ENCODE measurements at regions of chr17 and their contacts with region 1.

Region 1: GRCh38 chr17:67689534-67690177 is 28.1 kb upstream of the NOL11 start:
- DNase-seq: peak; percentile 57 to 63 (median 62)
- H3K4me3 ChIP-seq: no peak overlapping the region
- H3K4me3 Mint-ChIP-seq: no peak overlapping the region
- H3K27ac ChIP-seq: no peak overlapping the region
- H3K27ac Mint-ChIP-seq: peak overlapping the region in 2 of 7 donors; percentile 47 to 54
- H3K4me1 ChIP-seq: no peaks in the 10 kb centered on the region
- H3K4me1 Mint-ChIP-seq: peaks cover 0 to 4% (median 3%) of the 10 kb centered on the region in 4 donors
- H3K27me3 ChIP-seq: no peaks in the 10 kb centered on the region
- H3K27me3 Mint-ChIP-seq: no peaks in the 10 kb centered on the region

Region 2: DNA sequence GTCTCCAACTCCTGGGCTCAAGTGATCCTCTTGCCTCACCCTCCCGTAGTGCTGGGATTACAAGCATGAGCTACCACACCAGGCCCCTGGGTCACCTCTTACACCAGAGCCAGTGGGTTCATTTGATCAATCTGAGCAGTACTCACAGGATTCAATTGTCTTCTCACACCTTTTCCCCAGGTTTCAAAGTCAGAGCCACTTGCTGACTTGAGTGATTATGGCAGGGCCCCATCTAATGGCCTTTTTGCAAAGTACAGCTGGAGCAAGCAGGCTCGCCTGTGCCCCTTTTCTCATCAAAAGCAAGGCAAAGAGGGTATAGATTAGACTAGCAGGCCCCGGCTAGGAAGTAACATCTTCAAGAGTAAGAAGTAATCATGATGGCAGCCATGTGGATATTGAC is 86.7 kb before region 1 on chr17:
- CTCF ChIA-PET with region 1: interaction called, 3 read pairs
- POLR2A ChIA-PET with region 1: no interaction called
- intact Hi-C with region 1: loop called (anchors 5 kb)
- DNase-seq: peak; percentile 41 to 55 (median 47)
- H3K4me3 ChIP-seq: no peak overlapping the region
- H3K4me3 Mint-ChIP-seq: no peak overlapping the region
- H3K27ac ChIP-seq: no peak overlapping the region
- H3K27ac Mint-ChIP-seq: peak overlapping the region in 4 of 7 donors; percentile 26 to 86 (median 66)
- H3K4me1 ChIP-seq: no peaks in the 10 kb centered on the region
- H3K4me1 Mint-ChIP-seq: peaks cover 11 to 17% (median 16%) of the 10 kb centered on the region in 4 donors
- H3K27me3 ChIP-seq: no peaks in the 10 kb centered on the region
- H3K27me3 Mint-ChIP-seq: no peaks in the 10 kb centered on the region

Region 3: DNA sequence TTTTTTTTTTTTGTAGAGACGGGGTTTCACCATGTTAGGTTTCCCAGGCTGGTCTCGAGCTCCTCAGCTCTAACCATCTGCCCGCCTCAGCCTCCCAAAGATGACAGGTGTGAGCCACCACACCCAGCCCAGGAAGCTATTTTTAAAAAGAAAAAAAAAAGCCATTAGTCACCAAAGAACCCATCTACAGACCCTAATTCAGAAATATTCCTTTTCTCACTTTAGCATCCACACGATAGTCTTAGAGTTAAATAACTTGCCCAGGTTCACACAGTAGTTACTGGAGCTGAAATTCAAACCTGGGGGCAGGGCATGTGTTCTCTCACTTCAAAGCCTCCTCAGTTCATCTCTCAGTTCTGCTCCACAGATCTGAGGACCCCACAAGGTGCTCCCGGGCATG is 42.2 kb before region 1 on chr17:
- CTCF ChIA-PET with region 1: no interaction called
- POLR2A ChIA-PET with region 1: no interaction called
- intact Hi-C with region 1: no loop called
- DNase-seq: no peak
- H3K4me3 ChIP-seq: no peak overlapping the region
- H3K4me3 Mint-ChIP-seq: no peak overlapping the region
- H3K27ac ChIP-seq: no peak overlapping the region
- H3K27ac Mint-ChIP-seq: peak overlapping the region in 2 of 7 donors; percentile 46 to 56
- H3K4me1 ChIP-seq: no peaks in the 10 kb centered on the region
- H3K4me1 Mint-ChIP-seq: peaks cover 0 to 11% (median 8%) of the 10 kb centered on the region in 4 donors
- H3K27me3 ChIP-seq: no peaks in the 10 kb centered on the region
- H3K27me3 Mint-ChIP-seq: no peaks in the 10 kb centered on the region

Region 4: DNA sequence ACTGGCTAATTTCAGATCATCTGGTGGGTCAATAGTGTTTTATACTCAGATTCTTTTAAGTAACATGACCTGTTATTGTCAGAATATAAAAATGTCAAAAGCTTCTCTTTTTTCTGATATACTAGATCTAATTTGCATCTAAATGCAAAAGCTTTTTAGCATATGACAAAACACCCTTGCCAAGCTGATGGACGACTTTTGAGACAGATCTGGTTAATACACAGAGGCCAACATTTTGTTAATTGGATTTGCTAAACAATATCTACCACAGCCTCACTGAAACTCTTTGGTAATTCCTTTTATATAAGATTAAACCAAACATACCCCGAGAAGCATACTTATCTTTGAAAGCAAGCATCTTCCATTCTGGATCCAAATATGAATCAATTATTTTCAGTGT is 17.8 kb after region 1 on chr17:
- CTCF ChIA-PET with region 1: interaction called, 13 read pairs
- POLR2A ChIA-PET with region 1: no interaction called
- intact Hi-C with region 1: no loop called
- DNase-seq: no peak
- H3K4me3 ChIP-seq: no peak overlapping the region
- H3K4me3 Mint-ChIP-seq: no peak overlapping the region
- H3K27ac ChIP-seq: no peak overlapping the region
- H3K27ac Mint-ChIP-seq: peak overlapping the region in 1 of 7 donors; percentile 23
- H3K4me1 ChIP-seq: no peaks in the 10 kb centered on the region
- H3K4me1 Mint-ChIP-seq: no peaks in the 10 kb centered on the region
- H3K27me3 ChIP-seq: no peaks in the 10 kb centered on the region
- H3K27me3 Mint-ChIP-seq: peaks cover 6 to 7% of the 10 kb centered on the region in 2 donors

Region 5: DNA sequence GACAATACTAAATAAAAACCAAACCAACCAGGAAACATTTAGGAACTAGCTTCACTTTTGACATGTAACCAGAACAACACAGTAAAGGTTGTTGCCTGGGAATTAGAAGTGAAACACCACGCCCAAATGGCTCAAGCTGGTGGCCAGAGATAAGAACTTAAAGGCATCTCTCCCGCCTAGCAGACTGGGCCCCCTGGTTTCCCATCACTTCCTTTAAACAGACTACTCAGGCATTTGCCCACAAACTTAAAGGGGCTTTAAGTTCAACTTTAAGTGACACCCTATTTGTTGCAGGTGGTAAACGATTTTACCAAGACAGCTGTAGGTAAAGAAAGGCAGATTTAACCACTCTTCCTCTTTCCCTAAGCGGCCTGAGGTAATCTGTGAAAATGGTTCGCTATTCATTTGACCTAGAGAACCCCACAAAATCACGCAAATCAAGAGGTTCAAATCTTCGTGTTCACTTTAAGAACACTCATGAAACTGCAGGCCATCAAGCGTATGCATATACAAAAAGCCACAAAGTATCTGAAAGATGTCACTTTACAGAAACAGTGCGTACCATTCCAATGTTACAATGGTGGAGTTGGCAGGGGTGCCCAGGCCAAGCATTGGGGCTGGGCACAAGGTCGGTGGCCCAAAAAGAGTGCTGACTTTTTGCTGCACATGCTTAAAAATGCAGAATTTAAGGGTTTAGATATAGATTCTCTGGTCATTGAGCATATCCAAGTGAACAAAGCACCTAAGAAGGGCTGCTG is 94.9 kb after region 1 on chr17:
- CTCF ChIA-PET with region 1: no interaction called
- POLR2A ChIA-PET with region 1: no interaction called
- intact Hi-C with region 1: no loop called
- DNase-seq: no peak
- H3K4me3 ChIP-seq: no peak overlapping the region
- H3K4me3 Mint-ChIP-seq: no peak overlapping the region
- H3K27ac ChIP-seq: no peak overlapping the region
- H3K27ac Mint-ChIP-seq: peak overlapping the region in 1 of 7 donors; percentile 72
- H3K4me1 ChIP-seq: no peaks in the 10 kb centered on the region
- H3K4me1 Mint-ChIP-seq: no peaks in the 10 kb centered on the region
- H3K27me3 ChIP-seq: no peaks in the 10 kb centered on the region
- H3K27me3 Mint-ChIP-seq: peaks cover 2 to 6% of the 10 kb centered on the region in 2 donors